Activated CD8-positive, alpha-beta T cell treated with anti-CD3 and anti-CD28 coated beads, Interleukin-2, amount 10 ng/mL, durations not matched to agents 7 days and 5 days (primary cell): ENCODE measurements at regions of chr2 and their contacts with region 1.

Region 1: DNA sequence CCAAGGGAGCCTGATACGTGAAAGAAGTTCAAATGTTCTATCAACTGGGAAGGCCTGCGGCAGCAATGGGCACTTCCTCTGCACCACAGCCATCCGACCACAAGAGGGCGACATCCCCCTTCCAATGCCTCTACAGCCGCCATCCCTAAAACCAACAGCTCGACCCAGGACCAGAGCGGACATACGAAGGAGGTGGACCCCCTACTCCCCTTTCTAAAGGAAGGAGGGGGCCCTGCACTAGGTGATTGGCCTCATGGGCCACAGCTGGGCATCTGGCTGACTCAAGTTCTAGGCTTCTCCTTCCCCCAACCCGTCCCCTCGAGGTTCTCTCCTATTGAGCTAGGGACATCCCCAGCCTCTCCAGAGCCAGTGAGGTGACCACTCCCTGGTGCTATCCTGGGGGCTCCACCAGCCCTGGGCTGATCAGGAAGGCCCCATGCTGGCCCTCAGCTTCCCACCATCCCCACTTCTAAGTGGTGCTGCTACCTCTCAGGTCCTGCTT is 217.2 kb downstream of the TNS1 start:
- DNase-seq: peak; percentile 83
- ATAC-seq: peak; percentile 73
- H3K4me3 Mint-ChIP-seq: no peak overlapping the region
- H3K27ac Mint-ChIP-seq: peak overlapping the region; percentile 53
- H3K4me1 Mint-ChIP-seq: peaks cover 20% of the 10 kb centered on the region
- H3K27me3 Mint-ChIP-seq: peaks cover 8% of the 10 kb centered on the region

Region 2: DNA sequence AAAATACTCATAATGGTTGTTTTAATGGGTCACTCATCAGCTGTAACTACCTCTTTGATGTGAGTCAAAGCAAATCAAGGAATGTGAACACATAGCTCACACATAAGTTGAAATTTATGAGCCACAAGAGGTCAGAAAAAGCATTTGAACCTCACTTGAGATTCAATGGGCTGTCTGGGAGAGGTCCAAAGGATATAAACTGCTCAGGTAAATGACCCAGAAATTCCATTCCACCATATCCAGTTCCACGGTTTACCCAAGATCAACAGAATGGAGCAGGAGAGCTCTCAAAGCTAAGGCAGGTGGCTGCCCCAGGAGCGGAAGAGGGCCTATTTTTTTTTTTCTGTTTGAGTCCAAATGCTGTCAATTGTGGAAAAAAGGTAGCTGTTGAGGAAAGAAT is 246.9 kb before region 1 on chr2:
- CTCF ChIA-PET with region 1: no interaction called
- POLR2A ChIA-PET with region 1: no interaction called
- DNase-seq: no peak
- ATAC-seq: no peak
- H3K4me3 Mint-ChIP-seq: no peak overlapping the region
- H3K27ac Mint-ChIP-seq: no peak overlapping the region
- H3K4me1 Mint-ChIP-seq: no peaks in the 10 kb centered on the region
- H3K27me3 Mint-ChIP-seq: peaks cover 3% of the 10 kb centered on the region

Region 3: DNA sequence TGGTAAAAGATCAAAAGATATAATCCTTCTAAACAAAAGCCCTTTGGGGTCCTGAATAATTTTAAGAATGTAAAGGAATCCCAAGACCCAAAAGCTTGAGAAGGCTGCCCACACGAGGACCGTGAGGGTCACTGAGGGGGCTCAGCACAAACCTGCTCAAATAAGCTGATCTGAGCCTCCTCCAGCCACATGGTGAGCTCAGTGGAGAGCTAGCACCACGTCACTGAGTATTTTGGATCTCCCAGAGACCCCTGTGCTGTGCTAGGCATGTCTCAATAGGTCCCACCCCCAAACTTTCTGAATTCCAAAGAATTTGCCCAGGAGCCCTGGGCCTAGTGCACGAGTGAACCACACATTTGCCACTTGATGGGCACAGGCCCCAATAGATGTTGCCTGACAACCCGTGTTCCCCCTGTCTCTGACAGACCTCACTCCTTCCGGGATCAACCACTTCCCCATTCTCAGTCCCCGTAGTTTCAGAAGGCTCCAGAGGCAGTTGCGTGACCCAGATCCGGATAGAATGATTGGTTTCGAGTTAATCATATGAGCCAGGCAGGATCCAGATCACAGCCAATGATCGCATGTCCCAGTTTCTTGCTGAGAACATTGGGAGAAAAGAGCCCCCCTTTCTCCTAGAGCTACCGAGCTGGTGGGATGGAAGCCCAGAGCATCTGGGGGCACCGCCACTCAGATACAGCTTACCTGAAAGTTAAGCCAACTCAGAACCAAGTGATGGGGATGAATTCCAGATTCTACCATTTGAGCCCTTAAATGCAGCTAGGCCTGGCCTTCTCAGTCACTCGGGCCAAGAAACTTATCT is 13.4 kb after region 1 on chr2:
- CTCF ChIA-PET with region 1: interaction called, 31 read pairs
- POLR2A ChIA-PET with region 1: no interaction called
- DNase-seq: no peak
- ATAC-seq: peak; percentile 24
- H3K4me3 Mint-ChIP-seq: no peak overlapping the region
- H3K27ac Mint-ChIP-seq: peak overlapping the region; percentile 0
- H3K4me1 Mint-ChIP-seq: peaks cover 19% of the 10 kb centered on the region
- H3K27me3 Mint-ChIP-seq: no peaks in the 10 kb centered on the region

Region 4: GRCh38 chr2:217817466-217818292 is 32.1 kb after region 1 on chr2:
- CTCF ChIA-PET with region 1: no interaction called
- POLR2A ChIA-PET with region 1: no interaction called
- DNase-seq: no peak
- ATAC-seq: no peak
- H3K4me3 Mint-ChIP-seq: no peak overlapping the region
- H3K27ac Mint-ChIP-seq: no peak overlapping the region
- H3K4me1 Mint-ChIP-seq: no peaks in the 10 kb centered on the region
- H3K27me3 Mint-ChIP-seq: no peaks in the 10 kb centered on the region

Region 5: GRCh38 chr2:217886720-217887309 is 101.2 kb after region 1 on chr2:
- CTCF ChIA-PET with region 1: interaction called, 195 read pairs
- POLR2A ChIA-PET with region 1: interaction called, 5 read pairs
- DNase-seq: peak; percentile 81
- ATAC-seq: peak; percentile 81
- H3K4me3 Mint-ChIP-seq: no peak overlapping the region
- H3K27ac Mint-ChIP-seq: no peak overlapping the region
- H3K4me1 Mint-ChIP-seq: no peaks in the 10 kb centered on the region
- H3K27me3 Mint-ChIP-seq: peaks cover 2% of the 10 kb centered on the region

Region 6: DNA sequence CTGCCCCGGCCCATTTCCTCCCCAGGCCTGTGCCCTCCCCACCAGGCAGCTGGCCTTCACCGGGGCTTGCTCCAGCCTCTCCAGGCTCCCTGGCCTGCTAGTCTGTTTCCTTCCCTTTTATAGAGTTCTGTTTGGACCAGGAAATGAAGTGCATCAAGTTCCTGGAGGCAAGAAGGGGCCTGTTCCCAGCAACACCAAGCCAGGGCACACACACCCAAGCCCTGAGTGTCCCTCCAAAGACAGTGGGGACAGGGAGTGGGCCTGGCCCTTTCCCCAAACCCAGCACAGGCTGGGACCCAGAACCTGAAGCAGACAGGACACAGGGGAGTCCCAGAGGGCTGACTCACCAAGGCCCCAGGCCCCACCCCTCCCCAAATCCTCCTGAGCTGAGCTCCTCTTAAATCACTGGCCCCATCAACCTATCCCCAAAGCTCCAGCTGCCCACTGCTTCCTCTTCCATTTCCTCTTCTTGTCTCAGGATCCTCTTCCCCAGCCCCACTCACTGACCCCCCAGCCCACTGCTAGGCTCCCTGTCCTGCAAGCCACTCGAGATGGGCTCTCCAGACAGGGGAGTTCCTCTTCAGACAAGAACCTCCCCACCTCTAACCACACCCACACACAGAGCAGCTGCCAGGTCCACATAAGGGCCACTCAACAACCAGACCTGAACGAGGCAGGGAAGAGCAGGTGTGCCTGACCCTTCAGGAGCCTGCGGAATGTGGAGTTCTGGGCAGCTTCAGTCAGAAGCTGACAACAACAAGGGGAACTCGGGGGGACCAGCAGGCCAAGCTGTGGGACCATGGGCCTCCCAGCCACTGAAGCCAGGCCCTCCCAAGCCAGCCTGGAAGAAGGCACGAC is 143.0 kb after region 1 on chr2:
- CTCF ChIA-PET with region 1: no interaction called
- POLR2A ChIA-PET with region 1: no interaction called
- DNase-seq: no peak
- ATAC-seq: no peak
- H3K4me3 Mint-ChIP-seq: no peak overlapping the region
- H3K27ac Mint-ChIP-seq: peak overlapping the region; percentile 51
- H3K4me1 Mint-ChIP-seq: peaks cover 39% of the 10 kb centered on the region
- H3K27me3 Mint-ChIP-seq: peaks cover 23% of the 10 kb centered on the region

Region 7: GRCh38 chr2:217988014-217988839 is 202.6 kb after region 1 on chr2:
- CTCF ChIA-PET with region 1: interaction called, 39 read pairs
- POLR2A ChIA-PET with region 1: no interaction called
- DNase-seq: peak; percentile 86
- ATAC-seq: peak; percentile 80
- H3K4me3 Mint-ChIP-seq: no peak overlapping the region
- H3K27ac Mint-ChIP-seq: no peak overlapping the region
- H3K4me1 Mint-ChIP-seq: no peaks in the 10 kb centered on the region
- H3K27me3 Mint-ChIP-seq: peaks cover 5% of the 10 kb centered on the region

Region 8: GRCh38 chr2:217993817-217994463 is 208.3 kb after region 1 on chr2:
- CTCF ChIA-PET with region 1: interaction called, 39 read pairs
- POLR2A ChIA-PET with region 1: no interaction called
- DNase-seq: peak; percentile 72
- ATAC-seq: peak; percentile 77
- H3K4me3 Mint-ChIP-seq: no peak overlapping the region
- H3K27ac Mint-ChIP-seq: no peak overlapping the region
- H3K4me1 Mint-ChIP-seq: no peaks in the 10 kb centered on the region
- H3K27me3 Mint-ChIP-seq: peaks cover 7% of the 10 kb centered on the region

Region 9: GRCh38 chr2:218033590-218034496 is 248.2 kb after region 1 on chr2:
- CTCF ChIA-PET with region 1: interaction called, 15 read pairs
- POLR2A ChIA-PET with region 1: interaction called, 4 read pairs
- DNase-seq: no peak
- ATAC-seq: peak; percentile 21
- H3K4me3 Mint-ChIP-seq: peak overlapping the region; percentile 62
- H3K27ac Mint-ChIP-seq: peak overlapping the region; percentile 12
- H3K4me1 Mint-ChIP-seq: peaks cover 23% of the 10 kb centered on the region
- H3K27me3 Mint-ChIP-seq: peaks cover 7% of the 10 kb centered on the region

Region 10: DNA sequence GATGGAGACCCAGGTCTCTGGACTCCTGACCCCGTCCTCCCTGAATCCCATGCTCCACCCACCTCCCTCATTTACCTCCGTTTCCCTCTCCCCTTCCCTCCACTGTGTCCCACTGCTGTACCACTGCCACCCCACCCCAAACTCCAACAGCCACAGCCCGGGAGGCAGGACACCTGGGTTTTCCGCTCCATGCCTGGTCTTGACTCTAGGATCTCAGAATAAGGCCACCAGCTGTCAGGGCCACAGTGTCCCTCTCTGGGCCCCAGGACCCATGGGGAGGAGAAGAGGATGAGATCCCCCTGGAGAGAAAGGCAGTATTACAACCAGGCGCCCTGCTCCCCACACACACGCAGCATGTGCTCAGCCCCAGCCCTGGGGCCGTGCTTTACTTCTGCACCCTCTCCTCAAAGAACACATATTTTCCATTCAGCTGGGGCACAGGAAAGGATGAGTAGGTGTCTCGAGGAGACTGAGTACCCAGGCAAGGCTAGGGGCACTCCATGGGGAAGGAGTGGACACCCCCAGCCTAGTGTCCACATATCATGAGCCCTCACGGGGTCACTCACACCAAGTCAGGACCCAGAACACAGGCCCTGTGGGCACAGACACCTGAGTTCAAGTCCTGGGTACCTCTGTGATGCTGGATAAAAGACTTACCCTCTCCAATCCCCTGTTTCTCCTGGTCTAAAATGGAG is 284.2 kb after region 1 on chr2:
- CTCF ChIA-PET with region 1: interaction called, 17 read pairs
- POLR2A ChIA-PET with region 1: no interaction called
- DNase-seq: no peak
- ATAC-seq: no peak
- H3K4me3 Mint-ChIP-seq: no peak overlapping the region
- H3K27ac Mint-ChIP-seq: no peak overlapping the region
- H3K4me1 Mint-ChIP-seq: peaks cover 13% of the 10 kb centered on the region
- H3K27me3 Mint-ChIP-seq: peaks cover 14% of the 10 kb centered on the region

Region 11: GRCh38 chr2:218529990-218530389 is 744.4 kb after region 1 on chr2:
- CTCF ChIA-PET with region 1: no interaction called
- POLR2A ChIA-PET with region 1: no interaction called
- DNase-seq: no peak
- ATAC-seq: no peak
- H3K4me3 Mint-ChIP-seq: no peak overlapping the region
- H3K27ac Mint-ChIP-seq: no peak overlapping the region
- H3K4me1 Mint-ChIP-seq: peaks cover 2% of the 10 kb centered on the region
- H3K27me3 Mint-ChIP-seq: no peaks in the 10 kb centered on the region